Prostate gland (tissue), 2 donors: ENCODE measurements at regions of chr4 and their contacts with region 1.

Region 1: GRCh38 chr4:52545099-52546069 is 113.7 kb downstream of the USP46 start:
- DNase-seq: peak; percentile 60
- H3K4me3 ChIP-seq: no peak overlapping the region
- H3K27ac ChIP-seq: no peak overlapping the region
- H3K4me1 ChIP-seq: no peaks in the 10 kb centered on the region
- H3K27me3 ChIP-seq: no peaks in the 10 kb centered on the region
- CTCF ChIP-seq: peak; percentile 76 to 88 (median 86)
- POLR2A ChIP-seq: no peak

Region 2: GRCh38 chr4:52407545-52407944 is 137.8 kb before region 1 on chr4:
- intact Hi-C with region 1: no loop called
- DNase-seq: no peak
- H3K4me3 ChIP-seq: no peak overlapping the region
- H3K27ac ChIP-seq: no peak overlapping the region
- H3K4me1 ChIP-seq: no peaks in the 10 kb centered on the region
- H3K27me3 ChIP-seq: no peaks in the 10 kb centered on the region
- CTCF ChIP-seq: no peak
- POLR2A ChIP-seq: no peak

Region 3: DNA sequence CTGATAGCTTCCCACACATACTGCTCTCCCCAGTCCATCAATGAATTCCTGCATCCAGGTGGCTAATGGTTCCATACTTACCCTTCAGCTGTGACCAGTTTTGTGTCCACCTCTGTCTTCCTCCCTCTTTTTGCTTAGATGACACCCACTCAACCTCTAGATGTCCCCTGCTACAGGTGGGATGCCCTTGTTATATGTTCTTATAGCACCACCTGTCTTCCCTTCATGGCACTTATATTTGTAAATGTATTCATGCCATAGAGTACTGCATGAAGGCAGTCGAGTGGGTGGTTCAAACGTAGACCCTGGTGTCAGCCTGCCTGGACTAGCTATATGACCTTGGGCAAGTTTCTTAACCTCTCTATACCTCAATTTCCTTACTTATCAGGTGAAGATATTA is 120.2 kb after region 1 on chr4:
- intact Hi-C with region 1: loop called (anchors 2 kb)
- DNase-seq: no peak
- H3K4me3 ChIP-seq: no peak overlapping the region
- H3K27ac ChIP-seq: no peak overlapping the region
- H3K4me1 ChIP-seq: no peaks in the 10 kb centered on the region
- H3K27me3 ChIP-seq: no peaks in the 10 kb centered on the region
- CTCF ChIP-seq: peak in 2 of 4 experiments; percentile 19 to 35
- POLR2A ChIP-seq: no peak